Heart left ventricle (tissue), 16 donors: ENCODE measurements at regions of chrX and their contacts with region 1.

Region 1: DNA sequence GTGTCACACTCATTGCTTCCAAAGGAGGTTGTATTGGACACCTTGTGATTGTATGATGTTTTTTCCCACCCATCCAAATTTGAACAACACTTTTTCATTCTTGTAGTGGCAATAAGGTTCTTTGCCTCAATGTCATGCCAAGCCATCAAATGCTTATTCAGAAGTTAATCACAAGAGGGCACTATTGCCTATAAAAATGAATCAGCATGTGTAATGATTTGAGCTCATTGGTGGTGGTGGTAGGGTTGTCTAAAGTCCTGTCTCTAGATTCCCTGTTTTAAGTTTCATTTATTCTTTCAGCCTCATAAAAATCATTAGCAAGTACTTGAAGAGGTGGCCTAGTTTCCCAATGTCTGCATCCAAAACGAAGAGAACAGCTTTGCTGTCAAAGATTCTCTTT is 37.0 kb downstream of the IRS4 start:
- DNase-seq: no peak
- ATAC-seq: no peak
- H3K4me3 ChIP-seq: no peak overlapping the region
- H3K27ac ChIP-seq: no peak overlapping the region
- H3K4me1 ChIP-seq: no peaks in the 10 kb centered on the region
- H3K27me3 ChIP-seq: no peaks in the 10 kb centered on the region
- CTCF ChIP-seq: peak in 6 of 12 donors; percentile 16 to 34 (median 30)
- POLR2A ChIP-seq: no peak

Region 2: DNA sequence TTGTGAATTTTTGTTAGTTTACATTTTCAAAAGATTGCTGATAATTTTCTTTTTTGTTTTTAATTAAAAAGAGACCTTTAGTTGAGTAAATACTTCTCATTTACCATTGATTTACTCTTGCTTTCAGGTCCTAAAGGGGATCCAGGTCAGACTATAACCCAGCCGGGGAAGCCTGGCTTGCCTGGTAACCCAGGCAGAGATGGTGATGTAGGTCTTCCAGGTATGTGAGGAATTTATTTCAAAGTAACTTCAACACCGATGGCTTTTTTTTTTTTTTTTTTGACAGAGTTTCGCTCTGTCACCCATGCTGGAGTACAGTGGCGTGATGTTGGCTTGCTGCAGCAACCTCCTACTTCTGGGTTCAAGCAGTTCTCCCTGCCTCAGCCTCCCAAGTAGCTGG is 98.1 kb before region 1 on chrX:
- intact Hi-C with region 1: no loop called
- DNase-seq: no peak
- ATAC-seq: no peak
- H3K4me3 ChIP-seq: no peak overlapping the region
- H3K27ac ChIP-seq: no peak overlapping the region
- H3K4me1 ChIP-seq: no peaks in the 10 kb centered on the region
- H3K27me3 ChIP-seq: peaks cover 0 to 8% (median 0%) of the 10 kb centered on the region in 9 donors
- CTCF ChIP-seq: no peak
- POLR2A ChIP-seq: no peak

Region 3: GRCh38 chrX:108772549-108772948 is 73.2 kb after region 1 on chrX:
- intact Hi-C with region 1: no loop called
- DNase-seq: no peak
- ATAC-seq: no peak
- H3K4me3 ChIP-seq: no peak overlapping the region
- H3K27ac ChIP-seq: no peak overlapping the region
- H3K4me1 ChIP-seq: no peaks in the 10 kb centered on the region
- H3K27me3 ChIP-seq: no peaks in the 10 kb centered on the region
- CTCF ChIP-seq: no peak
- POLR2A ChIP-seq: no peak

Region 4: GRCh38 chrX:109384699-109385098 is 685.3 kb after region 1 on chrX:
- intact Hi-C with region 1: loop called in 1 of 10 experiments (anchors 10 kb)
- DNase-seq: peak in 2 of 5 donors; percentile 6 to 12
- ATAC-seq: peak in 1 of 4 donors; percentile 32
- H3K4me3 ChIP-seq: no peak overlapping the region
- H3K27ac ChIP-seq: no peak overlapping the region
- H3K4me1 ChIP-seq: no peaks in the 10 kb centered on the region
- H3K27me3 ChIP-seq: peaks cover 0 to 26% (median 0%) of the 10 kb centered on the region in 9 donors
- CTCF ChIP-seq: peak in 9 of 12 donors; percentile 11 to 50 (median 31)
- POLR2A ChIP-seq: no peak